Thyroid gland (tissue), 4 donors: ENCODE measurements at regions of chr19 and their contacts with region 1.

Region 1: GRCh38 chr19:55516878-55517620 is 19.9 kb downstream of the SBK2 start:
- DNase-seq: peak; percentile 90 to 93
- H3K4me3 ChIP-seq: peak overlapping the region in 2 of 3 donors; percentile 41 to 56
- H3K27ac ChIP-seq: peak overlapping the region; percentile 67 to 87 (median 79)
- H3K4me1 ChIP-seq: peaks cover 0 to 4% of the 10 kb centered on the region in 2 donors
- H3K27me3 ChIP-seq: no peaks in the 10 kb centered on the region
- CTCF ChIP-seq: peak; percentile 53 to 98 (median 92)
- POLR2A ChIP-seq: peak in 1 of 2 donors; percentile 50

Region 2: GRCh38 chr19:55605207-55605636 is 88.2 kb after region 1 on chr19:
- intact Hi-C with region 1: loop called (anchors 5 kb)
- DNase-seq: peak; percentile 98 to 99
- H3K4me3 ChIP-seq: peak overlapping the region in 2 of 3 donors; percentile 66 to 95
- H3K27ac ChIP-seq: peak overlapping the region; percentile 92 to 94 (median 94)
- H3K4me1 ChIP-seq: peaks cover 19 to 27% of the 10 kb centered on the region in 2 donors
- H3K27me3 ChIP-seq: no peaks in the 10 kb centered on the region
- CTCF ChIP-seq: no peak
- POLR2A ChIP-seq: peak in 1 of 2 donors; percentile 42

Region 3: DNA sequence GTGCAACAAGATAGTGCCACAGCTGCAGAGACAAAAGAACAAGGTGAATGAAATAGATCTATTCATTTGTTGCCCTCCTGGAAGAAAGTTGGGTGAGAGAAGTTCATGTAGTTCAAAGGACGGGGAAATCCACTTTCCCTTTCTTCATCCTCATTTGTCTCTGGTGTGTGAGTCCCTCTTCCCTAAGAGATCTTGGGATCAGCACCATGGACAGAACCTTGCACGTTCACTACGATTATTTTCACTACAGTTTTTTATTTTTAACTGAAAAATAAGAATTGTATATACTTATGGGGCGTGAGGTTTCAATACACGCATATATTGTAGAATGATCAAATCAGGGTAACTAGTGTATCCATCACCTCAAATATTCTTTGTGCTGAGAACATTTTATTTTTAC is 498.7 kb after region 1 on chr19:
- intact Hi-C with region 1: no loop called
- DNase-seq: no peak
- H3K4me3 ChIP-seq: no peak overlapping the region
- H3K27ac ChIP-seq: no peak overlapping the region
- H3K4me1 ChIP-seq: no peaks in the 10 kb centered on the region
- H3K27me3 ChIP-seq: no peaks in the 10 kb centered on the region
- CTCF ChIP-seq: no peak
- POLR2A ChIP-seq: no peak